Motor neuron (in vitro differentiated cells): ENCODE measurements at regions of chr3 and their contacts with region 1.

Region 1: GRCh38 chr3:81490541-81491288 is 270.7 kb downstream of the GBE1 start:
- ATAC-seq: peak; percentile 53 to 99 (median 94)
- H3K4me3 ChIP-seq: no peak overlapping the region
- H3K27ac ChIP-seq: no peak overlapping the region
- H3K4me1 ChIP-seq: no peaks in the 10 kb centered on the region

Region 2: DNA sequence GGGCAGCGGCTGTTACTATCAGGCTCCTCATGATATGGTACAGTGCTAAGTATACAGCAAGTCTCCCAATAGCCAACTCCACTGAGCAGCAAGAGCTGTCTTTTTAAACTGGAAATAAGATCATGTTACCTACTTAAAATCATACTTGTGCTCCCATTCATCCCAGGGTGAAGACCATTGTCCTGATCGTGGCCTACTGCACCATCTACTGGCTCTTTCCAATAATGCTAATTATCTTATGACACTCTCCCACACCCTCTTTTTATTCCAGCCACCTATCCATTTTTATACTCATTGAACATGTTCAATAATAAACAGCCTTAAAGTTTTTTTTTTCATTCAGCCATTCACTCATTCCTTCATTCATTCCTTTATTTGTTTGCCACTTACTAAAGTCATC is 153.0 kb after region 1 on chr3:
- in situ Hi-C with region 1: loop called in 1 of 9 experiments (anchors 25 kb)
- ATAC-seq: peak in 3 of 8 experiments; percentile 81 to 83 (median 83)
- H3K4me3 ChIP-seq: no peak overlapping the region
- H3K27ac ChIP-seq: no peak overlapping the region
- H3K4me1 ChIP-seq: no peaks in the 10 kb centered on the region

Region 3: GRCh38 chr3:81788610-81789009 is 297.9 kb after region 1 on chr3:
- in situ Hi-C with region 1: no loop called
- ATAC-seq: no peak
- H3K4me3 ChIP-seq: no peak overlapping the region
- H3K27ac ChIP-seq: no peak overlapping the region
- H3K4me1 ChIP-seq: no peaks in the 10 kb centered on the region